Mammary epithelial cell (primary cell): ENCODE measurements at regions of chr14 and their contacts with region 1.

Region 1: GRCh38 chr14:89040460-89041259 is 216.2 kb downstream of the TTC8 start:
- DNase-seq: peak; percentile 82
- H3K4me3 ChIP-seq: peak overlapping the region; percentile 28 to 47 (median 47)
- H3K27ac ChIP-seq: peak overlapping the region; percentile 69
- H3K4me1 ChIP-seq: peaks cover 14% of the 10 kb centered on the region
- H3K27me3 ChIP-seq: no peaks in the 10 kb centered on the region
- CTCF ChIP-seq: peak; percentile 95 to 99

Region 2: GRCh38 chr14:89178802-89179535 is 138.3 kb after region 1 on chr14:
- CTCF ChIA-PET with region 1: no interaction called
- dilution Hi-C with region 1: no loop called
- in situ Hi-C with region 1: no loop called
- intact Hi-C with region 1: loop called (anchors 5 kb)
- DNase-seq: no peak
- H3K4me3 ChIP-seq: no peak overlapping the region
- H3K27ac ChIP-seq: no peak overlapping the region
- H3K4me1 ChIP-seq: no peaks in the 10 kb centered on the region
- H3K27me3 ChIP-seq: no peaks in the 10 kb centered on the region
- CTCF ChIP-seq: no peak

Region 3: GRCh38 chr14:89767861-89768268 is 727.2 kb after region 1 on chr14:
- CTCF ChIA-PET with region 1: interaction called, 4 read pairs
- dilution Hi-C with region 1: no loop called
- in situ Hi-C with region 1: loop called in 1 of 2 experiments (anchors 25 kb)
- intact Hi-C with region 1: loop called (anchors 1 kb)
- DNase-seq: peak; percentile 25
- H3K4me3 ChIP-seq: no peak overlapping the region
- H3K27ac ChIP-seq: no peak overlapping the region
- H3K4me1 ChIP-seq: no peaks in the 10 kb centered on the region
- H3K27me3 ChIP-seq: no peaks in the 10 kb centered on the region
- CTCF ChIP-seq: peak; percentile 37 to 74

Region 4: DNA sequence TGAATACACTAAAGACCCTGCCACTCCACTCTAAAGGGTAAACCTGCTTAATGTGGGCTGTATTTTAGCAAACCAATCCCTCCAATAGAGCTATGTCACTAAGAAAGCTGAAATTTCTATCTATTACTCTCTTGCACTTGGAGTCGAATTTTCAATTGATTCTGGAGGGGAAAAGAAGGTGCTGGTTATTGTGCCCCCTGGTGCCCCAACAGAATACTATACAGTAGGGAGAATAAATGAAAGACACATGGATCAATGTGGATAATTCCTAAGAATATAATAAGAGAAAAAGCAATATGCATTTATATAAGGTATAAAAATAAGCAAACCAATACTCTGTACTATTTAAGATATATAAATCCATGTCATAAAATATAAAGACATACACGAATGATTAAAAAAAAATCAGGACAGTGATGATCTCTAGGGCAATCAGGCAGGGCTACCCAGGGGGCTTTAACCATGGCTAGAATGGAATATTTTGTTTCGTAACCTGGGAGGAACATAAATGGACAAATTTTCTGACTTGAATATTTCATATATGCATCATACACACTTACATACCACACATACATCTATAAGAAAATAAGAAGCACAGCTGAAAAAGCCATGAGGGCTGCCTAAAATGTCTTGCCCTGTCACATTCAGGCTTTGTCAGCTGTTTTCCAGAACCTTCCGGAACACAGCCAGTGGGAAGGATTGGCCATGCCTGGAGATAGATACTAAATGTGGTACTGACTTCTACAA is 859.4 kb after region 1 on chr14:
- CTCF ChIA-PET with region 1: no interaction called
- dilution Hi-C with region 1: no loop called
- in situ Hi-C with region 1: loop called in 1 of 2 experiments (anchors 25 kb)
- intact Hi-C with region 1: loop called (anchors 1 kb)
- DNase-seq: no peak
- H3K4me3 ChIP-seq: no peak overlapping the region
- H3K27ac ChIP-seq: no peak overlapping the region
- H3K4me1 ChIP-seq: no peaks in the 10 kb centered on the region
- H3K27me3 ChIP-seq: no peaks in the 10 kb centered on the region
- CTCF ChIP-seq: peak; percentile 46 to 61